BJ (cell line): ENCODE measurements at regions of chr16 and their contacts with region 1.

Region 1: GRCh38 chr16:11535471-11535870 is 51.2 kb downstream of the LITAF start:
- DNase-seq: no peak
- H3K4me3 ChIP-seq: no peak overlapping the region
- H3K27me3 ChIP-seq: no peaks in the 10 kb centered on the region
- CTCF ChIP-seq: no peak

Region 2: GRCh38 chr16:11396241-11397048 is 139.0 kb before region 1 on chr16:
- CTCF ChIA-PET with region 1: interaction called, 10 read pairs
- POLR2A ChIA-PET with region 1: no interaction called
- DNase-seq: no peak
- H3K4me3 ChIP-seq: no peak overlapping the region
- H3K27me3 ChIP-seq: 0 out of 2 replicates have a peak, but pooled peaks cover 2% of the 10 kb centered on the region
- CTCF ChIP-seq: peak; percentile 99